ENCODE measurements at regions of chr19 and their contacts with region 1.

Region 1: GRCh38 chr19:3163230-3163886 is 15.2 kb upstream of the S1PR4 start:
- DNase-seq: peak; percentile 66 to 74 (median 74)
- H3K4me3 ChIP-seq: peak overlapping the region in 1 of 3 experiments; percentile 23
- H3K4me3 Mint-ChIP-seq: peak overlapping the region in 1 of 2 donors; percentile 51
- H3K27ac ChIP-seq: peak overlapping the region in 1 of 2 donors; percentile 98
- H3K27ac Mint-ChIP-seq: peak overlapping the region; percentile 66 to 99 (median 88)
- H3K4me1 ChIP-seq: peaks cover 42 to 49% of the 10 kb centered on the region in 2 donors
- H3K4me1 Mint-ChIP-seq: peaks cover 53% of the 10 kb centered on the region
- H3K27me3 ChIP-seq: no peaks in the 10 kb centered on the region
- H3K27me3 Mint-ChIP-seq: peaks cover 0 to 2% (median 2%) of the 10 kb centered on the region in 3 donors
- CTCF ChIP-seq: peak; percentile 98

Region 2: DNA sequence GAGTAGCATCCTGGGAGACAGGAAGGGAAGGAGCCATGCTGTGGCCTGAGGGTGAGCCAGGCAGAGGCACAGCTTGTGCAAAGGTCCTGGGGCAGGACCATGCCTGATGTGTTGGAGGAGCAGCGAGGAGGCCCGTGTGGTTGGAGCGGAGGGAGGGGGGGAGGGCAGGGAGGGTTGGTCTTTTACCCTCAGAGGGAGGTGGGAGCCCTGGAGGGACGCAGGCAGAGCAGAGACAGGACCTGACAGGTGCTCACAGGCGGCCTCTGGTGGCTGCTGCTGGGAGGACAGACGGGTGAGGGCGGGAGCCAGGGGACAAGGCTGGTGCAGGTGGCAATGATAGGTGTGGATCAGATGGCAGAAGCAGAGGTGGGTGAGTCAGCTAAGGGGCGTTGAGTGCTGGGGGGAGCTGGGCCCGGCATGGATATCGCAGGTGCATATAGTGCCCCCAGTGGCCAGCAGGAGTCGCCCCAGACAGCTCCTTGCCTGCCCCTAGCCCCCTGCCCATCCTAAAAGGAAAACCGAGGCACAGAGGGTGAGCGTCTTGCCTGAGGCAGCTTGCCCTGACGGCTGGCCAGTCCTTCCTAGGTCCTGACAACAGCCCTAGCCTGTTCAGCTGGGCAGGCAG is 37.3 kb before region 1 on chr19:
- intact Hi-C with region 1: loop called (anchors 5 kb)
- DNase-seq: peak; percentile 42 to 55 (median 55)
- H3K4me3 ChIP-seq: peak overlapping the region in 1 of 3 experiments; percentile 45
- H3K4me3 Mint-ChIP-seq: peak overlapping the region in 1 of 2 donors; percentile 48
- H3K27ac ChIP-seq: no peak overlapping the region
- H3K27ac Mint-ChIP-seq: peak overlapping the region in 5 of 7 donors; percentile 55 to 92 (median 70)
- H3K4me1 ChIP-seq: peaks cover 18 to 22% of the 10 kb centered on the region in 2 donors
- H3K4me1 Mint-ChIP-seq: peaks cover 20% of the 10 kb centered on the region
- H3K27me3 ChIP-seq: no peaks in the 10 kb centered on the region
- H3K27me3 Mint-ChIP-seq: peaks cover 0 to 3% (median 0%) of the 10 kb centered on the region in 3 donors
- CTCF ChIP-seq: peak; percentile 75

Region 3: GRCh38 chr19:3193256-3194105 is 30.1 kb after region 1 on chr19:
- intact Hi-C with region 1: no loop called
- DNase-seq: peak in 1 of 3 donors; percentile 81
- H3K4me3 ChIP-seq: no peak overlapping the region
- H3K4me3 Mint-ChIP-seq: peak overlapping the region in 1 of 2 donors; percentile 21
- H3K27ac ChIP-seq: peak overlapping the region in 1 of 2 donors; percentile 8
- H3K27ac Mint-ChIP-seq: peak overlapping the region in 4 of 7 donors; percentile 36 to 81 (median 62)
- H3K4me1 ChIP-seq: peaks cover 27 to 28% of the 10 kb centered on the region in 2 donors
- H3K4me1 Mint-ChIP-seq: peaks cover 30% of the 10 kb centered on the region
- H3K27me3 ChIP-seq: no peaks in the 10 kb centered on the region
- H3K27me3 Mint-ChIP-seq: peaks cover 0 to 2% (median 0%) of the 10 kb centered on the region in 3 donors
- CTCF ChIP-seq: no peak

Region 4: DNA sequence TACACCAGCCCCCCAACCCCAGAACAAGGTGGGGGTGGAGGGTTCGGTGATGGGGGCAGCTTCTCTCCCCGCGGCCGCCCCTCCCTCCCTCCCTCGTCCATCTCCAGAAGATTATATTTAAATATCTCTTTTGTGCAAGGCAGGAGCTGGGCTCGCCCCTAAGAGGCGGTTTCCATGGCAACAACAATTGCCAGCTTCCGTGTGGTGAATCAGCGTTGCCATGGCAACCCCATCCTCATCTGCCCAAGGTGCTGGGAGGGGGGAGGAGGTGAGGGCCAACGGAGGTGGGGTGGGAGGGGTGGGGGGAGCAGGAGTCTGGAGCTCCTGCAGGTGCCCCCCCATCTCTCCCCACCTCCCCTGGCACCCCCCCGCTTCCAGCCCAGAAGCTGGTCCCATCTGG is 107.5 kb after region 1 on chr19:
- intact Hi-C with region 1: no loop called
- DNase-seq: peak in 1 of 3 donors; percentile 14
- H3K4me3 ChIP-seq: no peak overlapping the region
- H3K4me3 Mint-ChIP-seq: peak overlapping the region in 1 of 2 donors; percentile 47
- H3K27ac ChIP-seq: no peak overlapping the region
- H3K27ac Mint-ChIP-seq: no peak overlapping the region
- H3K4me1 ChIP-seq: peaks cover 7 to 9% of the 10 kb centered on the region in 2 donors
- H3K4me1 Mint-ChIP-seq: peaks cover 8% of the 10 kb centered on the region
- H3K27me3 ChIP-seq: peaks cover 10 to 48% of the 10 kb centered on the region in 2 donors
- H3K27me3 Mint-ChIP-seq: peaks cover 55 to 74% (median 69%) of the 10 kb centered on the region in 3 donors
- CTCF ChIP-seq: no peak

Measured in CD14-positive monocyte (primary cell).